ENCODE measurements at regions of chr3 and their contacts with region 1.

Region 1: GRCh38 chr3:49339945-49340800 is at the start of gene USP4:
- DNase-seq: peak; percentile 83 to 96 (median 88)
- ATAC-seq: peak; percentile 89 to 94 (median 93)
- H3K4me3 ChIP-seq: peak within 1 kb of the TSS; percentile 79 to 98
- H3K4me3 Mint-ChIP-seq: peak within 1 kb of the TSS; percentile 92 to 97 (median 95)
- H3K27ac ChIP-seq: peak within 1 kb of the TSS; percentile 96
- H3K27ac Mint-ChIP-seq: peak within 1 kb of the TSS; percentile 97 to 100
- H3K4me1 ChIP-seq: peaks cover 26 to 63% of the 10 kb centered on the region in 2 experiments
- H3K4me1 Mint-ChIP-seq: peaks cover 39 to 50% (median 49%) of the 10 kb centered on the region in 3 donors
- H3K27me3 ChIP-seq: no peaks in the 10 kb centered on the region
- H3K27me3 Mint-ChIP-seq: no peaks in the 10 kb centered on the region
- total RNA-seq, gene USP4: 101 to 107 (median 103) TPM

Region 2: DNA sequence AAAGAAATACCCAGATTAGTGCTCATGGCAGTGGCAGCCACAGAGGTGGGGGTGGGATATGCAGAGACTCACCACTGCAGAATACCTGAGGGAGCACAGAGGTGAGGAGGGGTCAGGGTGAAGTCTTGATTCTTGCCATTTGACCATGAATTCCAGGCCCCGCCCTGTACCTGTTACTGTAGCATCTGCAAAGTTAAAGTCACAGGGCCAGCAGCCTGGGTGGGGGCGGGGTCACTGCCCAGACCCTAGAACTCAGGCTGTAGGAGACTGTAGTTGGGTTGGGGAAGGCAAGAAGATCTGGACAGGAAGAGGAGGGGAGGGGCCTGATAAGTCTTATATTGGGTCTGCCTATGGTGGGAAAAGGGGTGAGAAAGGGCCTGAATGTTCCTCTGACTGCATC is 188.6 kb before region 1 on chr3:
- CTCF ChIA-PET with region 1: no interaction called
- POLR2A ChIA-PET with region 1: no interaction called
- DNase-seq: no peak
- ATAC-seq: no peak
- H3K4me3 ChIP-seq: no peak overlapping the region
- H3K4me3 Mint-ChIP-seq: no peak overlapping the region
- H3K27ac ChIP-seq: no peak overlapping the region
- H3K27ac Mint-ChIP-seq: no peak overlapping the region
- H3K4me1 ChIP-seq: no peaks in the 10 kb centered on the region
- H3K4me1 Mint-ChIP-seq: no peaks in the 10 kb centered on the region
- H3K27me3 ChIP-seq: no peaks in the 10 kb centered on the region
- H3K27me3 Mint-ChIP-seq: no peaks in the 10 kb centered on the region

Region 3: DNA sequence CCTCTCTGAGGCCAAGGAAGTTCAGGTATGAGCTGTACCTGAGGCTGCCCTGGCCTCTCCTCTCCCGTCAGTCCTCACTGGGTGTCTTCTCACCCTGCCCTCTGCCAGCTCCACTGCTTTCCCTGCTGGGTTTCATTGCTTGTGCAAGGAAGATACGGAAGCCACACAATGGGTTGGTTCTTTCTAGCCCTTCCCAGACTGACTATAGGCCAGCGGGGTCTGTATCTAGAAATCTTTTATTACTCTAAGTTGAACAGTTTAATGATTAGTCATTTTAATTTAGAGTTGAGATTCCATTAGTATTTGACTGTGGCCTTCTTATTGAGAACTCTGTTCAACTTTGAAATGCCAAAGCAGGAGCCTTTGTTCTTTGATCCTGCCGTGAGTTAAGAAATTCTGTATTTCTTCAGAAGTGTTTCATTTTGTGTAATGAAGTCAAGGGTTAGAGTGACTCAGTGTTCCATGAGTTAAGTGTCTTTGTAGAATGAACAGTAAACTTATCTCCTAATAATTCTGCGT is 79.3 kb before region 1 on chr3:
- CTCF ChIA-PET with region 1: no interaction called
- POLR2A ChIA-PET with region 1: interaction called in 1 of 2 experiments, 12 read pairs
- DNase-seq: no peak
- ATAC-seq: no peak
- H3K4me3 ChIP-seq: no peak overlapping the region
- H3K4me3 Mint-ChIP-seq: no peak overlapping the region
- H3K27ac ChIP-seq: no peak overlapping the region
- H3K27ac Mint-ChIP-seq: no peak overlapping the region
- H3K4me1 ChIP-seq: no peaks in the 10 kb centered on the region
- H3K4me1 Mint-ChIP-seq: no peaks in the 10 kb centered on the region
- H3K27me3 ChIP-seq: no peaks in the 10 kb centered on the region
- H3K27me3 Mint-ChIP-seq: no peaks in the 10 kb centered on the region

Region 4: DNA sequence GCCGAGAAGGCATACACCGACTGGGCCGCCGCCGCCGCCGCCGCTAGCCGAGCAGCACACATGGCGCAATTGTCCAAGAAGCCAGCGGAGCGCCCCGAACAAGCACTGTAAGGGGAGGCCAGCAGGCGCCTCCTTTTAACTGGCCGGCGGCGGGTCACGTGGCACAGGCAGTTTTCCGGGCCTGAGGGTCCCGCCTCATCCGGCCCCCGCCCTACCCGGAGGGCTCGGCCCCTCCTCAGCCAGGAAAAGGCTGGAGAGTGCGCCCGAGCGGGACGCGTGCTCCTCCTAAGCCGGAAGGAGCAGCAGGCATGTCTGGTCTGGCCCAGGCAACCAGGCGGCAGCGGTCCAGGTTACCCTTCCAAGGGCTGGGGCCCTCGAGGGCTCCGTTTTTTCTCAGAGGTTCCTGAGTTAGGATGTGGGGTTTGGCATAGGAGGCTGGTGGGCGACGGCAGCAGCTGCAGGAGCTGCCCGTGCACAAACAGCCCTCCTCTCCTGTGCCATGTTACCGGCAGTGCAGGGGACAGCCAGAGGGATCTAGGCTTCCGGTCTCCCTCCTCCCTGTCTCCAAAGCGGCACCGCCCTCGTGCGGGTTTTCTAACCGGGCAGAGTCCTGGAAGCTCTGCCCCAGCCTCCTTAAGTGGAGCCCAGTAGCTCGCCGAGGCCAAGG is 18.2 kb after region 1 on chr3 and contains the start of gene GPX1:
- CTCF ChIA-PET with region 1: interaction called, 5 to 13 read pairs
- POLR2A ChIA-PET with region 1: interaction called, 4 to 10 read pairs
- DNase-seq: peak; percentile 37 to 81 (median 55)
- ATAC-seq: peak; percentile 81 to 88 (median 87)
- H3K4me3 ChIP-seq: peak within 1 kb of the TSS; percentile 64 to 77
- H3K4me3 Mint-ChIP-seq: peak within 1 kb of the TSS; percentile 87 to 98 (median 95)
- H3K27ac ChIP-seq: peak within 1 kb of the TSS; percentile 78
- H3K27ac Mint-ChIP-seq: peak within 1 kb of the TSS; percentile 93 to 95
- H3K4me1 ChIP-seq: peaks cover 7 to 33% of the 10 kb centered on the region in 2 experiments
- H3K4me1 Mint-ChIP-seq: peaks cover 28 to 38% (median 34%) of the 10 kb centered on the region in 3 donors
- H3K27me3 ChIP-seq: no peaks in the 10 kb centered on the region
- H3K27me3 Mint-ChIP-seq: no peaks in the 10 kb centered on the region
- total RNA-seq, gene GPX1: 45.1 to 87.5 (median 73.8) TPM

Region 5: GRCh38 chr3:49428697-49429100 is 88.5 kb after region 1 on chr3:
- CTCF ChIA-PET with region 1: interaction called in 1 of 2 experiments, 11 read pairs
- POLR2A ChIA-PET with region 1: no interaction called
- DNase-seq: peak in 1 of 35 experiments; percentile 28
- ATAC-seq: peak; percentile 4 to 19 (median 10)
- H3K4me3 ChIP-seq: peak overlapping the region; percentile 72 to 86
- H3K4me3 Mint-ChIP-seq: peak overlapping the region; percentile 91 to 95 (median 93)
- H3K27ac ChIP-seq: peak overlapping the region; percentile 73
- H3K27ac Mint-ChIP-seq: peak overlapping the region; percentile 95
- H3K4me1 ChIP-seq: peaks cover 6 to 30% of the 10 kb centered on the region in 2 experiments
- H3K4me1 Mint-ChIP-seq: peaks cover 25 to 34% (median 30%) of the 10 kb centered on the region in 3 donors
- H3K27me3 ChIP-seq: no peaks in the 10 kb centered on the region
- H3K27me3 Mint-ChIP-seq: no peaks in the 10 kb centered on the region

Region 6: DNA sequence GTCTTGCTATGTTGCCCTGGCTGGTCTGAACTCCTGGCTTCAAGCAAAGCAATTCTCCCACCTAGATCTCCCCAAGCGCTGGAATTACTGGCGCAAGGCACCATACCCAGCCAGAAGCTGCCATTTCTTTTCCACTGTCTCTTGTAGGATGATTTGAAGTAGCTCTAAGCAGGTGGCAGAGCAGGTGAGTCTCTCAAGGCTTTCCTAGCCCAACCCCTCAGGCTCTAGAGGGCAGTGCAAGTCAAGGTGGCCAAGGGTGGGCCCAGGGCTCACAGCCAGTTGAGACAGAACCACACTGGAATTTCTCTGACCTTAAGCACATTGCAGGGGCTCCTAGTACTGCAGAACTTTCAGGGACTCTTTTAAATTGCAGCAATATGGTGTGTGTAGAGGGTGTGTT is 114.3 kb after region 1 on chr3:
- CTCF ChIA-PET with region 1: interaction called, 3 to 58 read pairs
- POLR2A ChIA-PET with region 1: interaction called, 3 to 7 read pairs
- DNase-seq: no peak
- ATAC-seq: peak in 1 of 4 experiments; percentile 56
- H3K4me3 ChIP-seq: no peak overlapping the region
- H3K4me3 Mint-ChIP-seq: no peak overlapping the region
- H3K27ac ChIP-seq: no peak overlapping the region
- H3K27ac Mint-ChIP-seq: no peak overlapping the region
- H3K4me1 ChIP-seq: no peaks in the 10 kb centered on the region
- H3K4me1 Mint-ChIP-seq: no peaks in the 10 kb centered on the region
- H3K27me3 ChIP-seq: no peaks in the 10 kb centered on the region
- H3K27me3 Mint-ChIP-seq: no peaks in the 10 kb centered on the region

Region 7: GRCh38 chr3:49533786-49534519 is 193.8 kb after region 1 on chr3:
- CTCF ChIA-PET with region 1: no interaction called
- POLR2A ChIA-PET with region 1: no interaction called
- DNase-seq: no peak
- ATAC-seq: no peak
- H3K4me3 ChIP-seq: no peak overlapping the region
- H3K4me3 Mint-ChIP-seq: no peak overlapping the region
- H3K27ac ChIP-seq: no peak overlapping the region
- H3K27ac Mint-ChIP-seq: no peak overlapping the region
- H3K4me1 ChIP-seq: no peaks in the 10 kb centered on the region
- H3K4me1 Mint-ChIP-seq: no peaks in the 10 kb centered on the region
- H3K27me3 ChIP-seq: no peaks in the 10 kb centered on the region
- H3K27me3 Mint-ChIP-seq: no peaks in the 10 kb centered on the region

Measured in T-cell (primary cell).